Pancreas (tissue), 10 donors: ENCODE measurements at regions of chr12 and their contacts with region 1.

Region 1: GRCh38 chr12:64039281-64039871 is 182.7 kb downstream of the KICS2 start:
- DNase-seq: peak in 4 of 6 donors; percentile 54 to 73 (median 68)
- ATAC-seq: peak; percentile 74 to 90 (median 87)
- H3K4me3 ChIP-seq: peak overlapping the region in 1 of 4 donors; percentile 19
- H3K27ac ChIP-seq: peak overlapping the region; percentile 19 to 74 (median 52)
- H3K4me1 ChIP-seq: peaks cover 10 to 31% (median 19%) of the 10 kb centered on the region in 3 donors
- H3K27me3 ChIP-seq: no peaks in the 10 kb centered on the region
- CTCF ChIP-seq: no peak

Region 2: GRCh38 chr12:63843721-63844390 is 195.5 kb before region 1 on chr12:
- intact Hi-C with region 1: loop called in 1 of 3 experiments (anchors 5 kb)
- DNase-seq: peak; percentile 89 to 96 (median 93)
- ATAC-seq: peak; percentile 88 to 94 (median 91)
- H3K4me3 ChIP-seq: peak overlapping the region; percentile 57 to 98 (median 96)
- H3K27ac ChIP-seq: peak overlapping the region; percentile 87 to 92 (median 90)
- H3K4me1 ChIP-seq: peaks cover 0 to 7% (median 3%) of the 10 kb centered on the region in 3 donors
- H3K27me3 ChIP-seq: no peaks in the 10 kb centered on the region
- CTCF ChIP-seq: peak; percentile 84 to 97 (median 94)

Region 3: DNA sequence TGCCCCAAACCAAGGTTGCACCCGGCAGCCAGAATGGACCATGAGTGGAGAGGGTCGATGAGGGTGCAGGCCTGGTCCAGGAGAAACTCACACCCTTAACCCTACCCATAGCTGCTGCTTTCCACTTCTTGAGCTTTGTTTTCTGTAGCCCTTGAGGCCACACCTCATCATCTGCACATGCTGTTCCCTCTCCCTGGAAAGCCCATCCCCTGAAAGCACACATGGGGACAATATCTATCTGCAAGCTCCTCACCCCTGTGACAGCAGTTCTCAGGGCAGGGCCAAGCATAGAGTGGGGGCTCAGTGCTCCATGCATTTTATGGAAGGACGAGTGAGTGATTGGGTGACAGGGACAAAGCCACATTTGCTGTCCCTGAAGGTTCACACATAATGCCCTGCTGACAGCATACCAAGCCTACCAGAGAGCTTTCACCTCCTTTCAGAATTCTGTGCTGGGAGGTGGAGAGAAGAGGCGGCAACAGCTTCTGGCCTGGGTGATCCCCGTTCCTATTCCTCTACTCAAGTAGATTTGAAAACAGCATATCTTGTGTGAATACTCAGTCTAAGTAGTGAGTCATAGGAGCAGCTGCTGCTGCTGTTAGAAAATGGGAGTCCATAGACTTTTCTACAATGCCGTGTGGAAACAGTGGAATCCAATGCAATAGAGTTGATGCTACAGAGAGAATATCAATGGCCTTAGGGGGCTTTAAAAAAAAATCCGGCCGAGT is 150.3 kb before region 1 on chr12:
- intact Hi-C with region 1: loop called in 1 of 3 experiments (anchors 5 kb)
- DNase-seq: no peak
- ATAC-seq: peak in 2 of 4 donors; percentile 35 to 54
- H3K4me3 ChIP-seq: no peak overlapping the region
- H3K27ac ChIP-seq: peak overlapping the region in 1 of 4 donors; percentile 16
- H3K4me1 ChIP-seq: peaks cover 0 to 5% (median 0%) of the 10 kb centered on the region in 3 donors
- H3K27me3 ChIP-seq: no peaks in the 10 kb centered on the region
- CTCF ChIP-seq: no peak

Region 4: GRCh38 chr12:64127811-64128210 is 88.4 kb after region 1 on chr12:
- intact Hi-C with region 1: no loop called
- DNase-seq: no peak
- ATAC-seq: no peak
- H3K4me3 ChIP-seq: no peak overlapping the region
- H3K27ac ChIP-seq: no peak overlapping the region
- H3K4me1 ChIP-seq: peaks cover 4 to 5% (median 4%) of the 10 kb centered on the region in 3 donors
- H3K27me3 ChIP-seq: no peaks in the 10 kb centered on the region
- CTCF ChIP-seq: no peak

Region 5: GRCh38 chr12:64461634-64462414 is 422.4 kb after region 1 on chr12:
- intact Hi-C with region 1: no loop called
- DNase-seq: no peak
- ATAC-seq: peak in 1 of 4 donors; percentile 23
- H3K4me3 ChIP-seq: no peak overlapping the region
- H3K27ac ChIP-seq: no peak overlapping the region
- H3K4me1 ChIP-seq: peaks cover 0 to 6% (median 0%) of the 10 kb centered on the region in 3 donors
- H3K27me3 ChIP-seq: no peaks in the 10 kb centered on the region
- CTCF ChIP-seq: no peak